ENCODE measurements at regions of chr1 and their contacts with region 1.

Region 1: GRCh38 chr1:22105611-22106207 is 37.2 kb downstream of the WNT4 start:
- DNase-seq: no peak
- ATAC-seq: peak; percentile 84
- H3K4me3 Mint-ChIP-seq: no peak overlapping the region
- H3K27ac Mint-ChIP-seq: peak overlapping the region; percentile 51
- H3K4me1 Mint-ChIP-seq: peaks cover 52% of the 10 kb centered on the region
- H3K27me3 Mint-ChIP-seq: no peaks in the 10 kb centered on the region
- CTCF ChIP-seq: peak; percentile 58

Region 2: DNA sequence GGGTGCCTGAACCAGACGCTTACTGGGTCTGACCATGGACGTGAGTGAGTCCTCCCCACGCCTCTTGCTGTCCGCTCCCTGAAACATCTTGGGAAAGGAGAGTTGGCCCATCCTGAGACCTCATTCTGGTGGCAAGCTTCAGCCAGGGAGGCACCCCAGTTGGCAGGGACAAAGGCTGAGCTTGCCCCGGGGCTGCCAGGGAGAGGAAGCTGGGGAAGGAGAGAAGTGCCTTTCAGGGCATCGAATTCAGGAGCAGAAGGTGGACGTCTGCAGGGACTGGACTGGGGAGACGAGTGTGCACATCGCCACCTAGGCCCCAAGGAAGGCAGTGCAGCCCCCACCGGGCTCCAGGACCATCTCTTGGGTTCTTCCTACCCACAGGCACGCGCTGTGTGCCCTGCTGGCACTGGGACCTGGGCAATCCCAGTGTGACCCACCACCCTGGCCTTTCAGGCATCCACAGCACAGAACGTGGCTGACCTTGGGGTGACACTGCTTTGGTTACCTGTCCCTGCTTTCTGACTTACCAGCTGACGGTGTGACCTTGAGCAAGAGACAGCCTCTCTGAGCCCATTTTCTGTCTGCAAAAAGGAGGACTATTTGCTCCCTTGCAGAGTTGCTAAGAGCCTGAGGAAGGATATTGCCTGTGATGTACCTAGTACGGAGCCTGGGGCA is 170.1 kb after region 1 on chr1:
- CTCF ChIA-PET with region 1: interaction called, 3 read pairs
- POLR2A ChIA-PET with region 1: no interaction called
- intact Hi-C with region 1: loop called (anchors 1 kb)
- DNase-seq: peak; percentile 37
- ATAC-seq: peak; percentile 45
- H3K4me3 Mint-ChIP-seq: no peak overlapping the region
- H3K27ac Mint-ChIP-seq: no peak overlapping the region
- H3K4me1 Mint-ChIP-seq: no peaks in the 10 kb centered on the region
- H3K27me3 Mint-ChIP-seq: peaks cover 20% of the 10 kb centered on the region
- CTCF ChIP-seq: no peak

Region 3: DNA sequence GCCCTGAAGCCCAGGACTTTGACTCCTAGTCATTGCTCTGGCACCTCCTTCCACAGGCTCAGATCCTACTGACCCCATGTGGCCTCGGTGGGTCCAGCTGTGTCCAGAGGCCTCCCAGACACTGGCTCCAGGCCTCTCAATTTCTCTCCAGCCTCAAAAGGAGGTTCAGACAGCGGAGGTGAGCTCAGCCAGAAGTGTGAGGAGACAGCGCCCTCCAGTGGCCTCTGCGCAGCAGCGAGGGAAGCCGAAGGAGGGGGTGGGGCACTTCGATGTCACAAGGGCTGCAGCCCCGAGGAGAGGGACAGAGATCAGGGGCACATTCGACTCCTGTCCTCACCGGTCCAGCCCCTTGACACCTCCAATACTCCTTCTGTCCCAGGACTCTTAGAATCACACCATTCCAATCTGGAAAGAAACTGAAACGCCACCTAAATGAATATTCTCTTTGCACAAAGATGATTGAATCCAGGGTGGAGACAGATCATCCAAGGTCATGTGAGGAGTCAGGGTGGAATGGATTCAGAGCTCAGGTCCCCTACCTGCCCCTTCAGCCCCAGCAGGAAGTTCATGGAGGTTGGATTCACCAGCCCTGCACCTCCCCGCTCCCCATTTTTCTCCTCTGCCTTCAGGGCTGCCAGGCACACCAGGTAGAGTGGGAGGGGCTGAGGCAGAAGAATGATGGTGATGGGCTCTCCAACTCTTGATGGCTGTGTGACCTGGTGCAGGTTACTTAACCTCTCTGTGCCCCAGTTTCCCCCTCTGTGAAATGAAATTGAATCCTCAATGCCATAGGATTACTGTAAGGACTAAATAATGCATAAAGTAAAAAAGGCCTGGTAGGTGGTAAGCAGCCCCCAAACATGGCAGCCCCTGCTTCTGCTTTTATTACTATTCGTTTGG is 311.1 kb after region 1 on chr1:
- CTCF ChIA-PET with region 1: interaction called, 5 read pairs
- POLR2A ChIA-PET with region 1: no interaction called
- intact Hi-C with region 1: loop called (anchors 1 kb)
- DNase-seq: peak; percentile 50
- ATAC-seq: peak; percentile 66
- H3K4me3 Mint-ChIP-seq: no peak overlapping the region
- H3K27ac Mint-ChIP-seq: no peak overlapping the region
- H3K4me1 Mint-ChIP-seq: peaks cover 5% of the 10 kb centered on the region
- H3K27me3 Mint-ChIP-seq: peaks cover 36% of the 10 kb centered on the region
- CTCF ChIP-seq: no peak

Region 4: DNA sequence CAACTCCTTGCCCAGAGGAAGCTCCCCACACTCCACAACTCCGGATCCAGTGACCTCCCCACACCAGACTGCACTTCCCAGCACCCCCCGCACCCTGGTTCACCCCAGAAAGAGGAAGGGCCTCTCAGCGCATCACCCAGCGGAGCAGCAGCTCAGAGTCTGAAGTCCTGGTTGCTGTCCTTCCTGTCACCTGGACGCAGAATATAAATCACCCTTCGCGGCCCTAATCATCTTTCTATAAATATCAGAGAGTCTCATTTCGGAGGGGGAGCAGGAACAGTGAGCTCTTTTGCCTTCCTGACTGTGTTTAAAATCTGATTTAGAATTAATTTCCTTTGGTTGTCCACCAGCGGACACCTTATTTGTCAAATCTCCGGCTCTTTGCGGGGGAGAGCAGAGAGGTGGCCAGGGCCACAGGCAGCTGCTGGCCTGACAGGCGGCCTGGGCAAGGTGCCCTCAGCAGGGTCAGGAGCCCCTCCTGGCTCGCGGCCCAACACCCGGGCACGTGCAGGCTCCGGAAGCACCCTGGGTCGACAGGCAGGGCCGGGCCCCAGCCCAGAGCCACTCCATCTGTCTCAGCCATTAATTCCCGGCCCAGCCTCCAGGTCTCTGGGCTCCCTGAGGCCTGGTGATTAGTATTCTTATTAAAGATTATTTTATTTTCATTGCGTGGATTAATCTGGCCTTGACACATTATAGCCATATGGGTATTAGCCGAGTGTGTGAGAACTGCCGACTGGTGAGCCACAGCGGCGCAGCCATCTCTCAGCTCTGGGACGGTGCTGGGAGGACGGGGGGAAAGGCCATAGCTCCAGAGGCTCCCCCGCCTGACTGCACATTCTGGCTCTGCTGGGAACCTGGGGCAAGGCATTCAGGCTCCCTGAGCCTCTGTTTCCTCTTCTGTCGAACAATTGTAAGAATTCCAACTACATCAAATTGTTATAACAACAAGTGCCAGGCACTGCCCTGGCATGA is 477.2 kb after region 1 on chr1:
- CTCF ChIA-PET with region 1: no interaction called
- POLR2A ChIA-PET with region 1: no interaction called
- intact Hi-C with region 1: no loop called
- DNase-seq: no peak
- ATAC-seq: no peak
- H3K4me3 Mint-ChIP-seq: no peak overlapping the region
- H3K27ac Mint-ChIP-seq: no peak overlapping the region
- H3K4me1 Mint-ChIP-seq: no peaks in the 10 kb centered on the region
- H3K27me3 Mint-ChIP-seq: peaks cover 6% of the 10 kb centered on the region
- CTCF ChIP-seq: no peak

Region 5: DNA sequence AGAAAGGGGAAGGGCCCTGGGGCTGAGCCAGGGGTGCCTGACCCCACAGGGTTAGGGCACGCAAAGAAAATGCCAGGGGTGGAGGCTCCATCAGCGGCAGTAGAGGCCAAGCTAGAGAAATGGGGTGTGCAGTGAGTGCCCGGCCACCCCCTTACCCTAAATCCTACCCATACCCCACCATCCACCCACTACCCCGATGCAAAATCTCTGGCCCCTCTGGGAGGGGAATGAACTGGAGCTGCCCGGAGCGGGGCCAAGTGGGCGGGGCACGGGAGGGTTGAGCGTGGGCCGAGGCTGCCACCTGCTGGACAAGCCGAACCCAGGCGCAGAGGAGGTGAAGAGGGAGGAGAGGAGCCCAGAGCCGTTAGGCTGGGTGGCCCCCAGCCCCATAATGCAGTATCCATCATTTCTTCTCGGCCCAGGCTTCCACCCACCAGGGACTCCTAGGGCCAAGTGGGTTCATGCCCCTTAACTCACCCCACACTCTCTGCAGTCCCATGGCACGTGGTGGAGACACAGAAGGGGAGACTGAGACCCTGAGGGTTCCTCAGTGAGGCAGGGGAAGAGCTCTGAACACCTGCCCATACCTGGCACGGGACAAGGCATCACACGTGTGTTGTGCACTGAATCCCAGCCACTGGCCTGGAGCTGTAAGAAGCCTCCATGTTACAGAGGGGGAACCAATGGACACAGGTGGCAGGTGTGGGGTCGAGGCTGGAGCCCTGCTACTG is 536.4 kb after region 1 on chr1:
- CTCF ChIA-PET with region 1: interaction called, 3 read pairs
- POLR2A ChIA-PET with region 1: no interaction called
- intact Hi-C with region 1: loop called (anchors 1 kb)
- DNase-seq: peak; percentile 67
- ATAC-seq: peak; percentile 93
- H3K4me3 Mint-ChIP-seq: no peak overlapping the region
- H3K27ac Mint-ChIP-seq: no peak overlapping the region
- H3K4me1 Mint-ChIP-seq: no peaks in the 10 kb centered on the region
- H3K27me3 Mint-ChIP-seq: peaks cover 16% of the 10 kb centered on the region
- CTCF ChIP-seq: peak; percentile 28